Endothelial cell of umbilical vein (primary cell): ENCODE measurements at regions of chr11 and their contacts with region 1.

Region 1: GRCh38 chr11:119741369-119742262 is 12.6 kb upstream of the NECTIN1 start:
- DNase-seq: peak; percentile 20
- H3K4me3 ChIP-seq: no peak overlapping the region
- H3K27ac ChIP-seq: no peak overlapping the region
- H3K4me1 ChIP-seq: no peaks in the 10 kb centered on the region
- H3K27me3 ChIP-seq: peaks cover 23 to 30% of the 10 kb centered on the region in 2 experiments
- CTCF ChIP-seq: peak; percentile 79 to 94
- POLR2A ChIP-seq: no peak

Region 2: GRCh38 chr11:119641983-119642745 is 99.5 kb before region 1 on chr11:
- CTCF ChIA-PET with region 1: interaction called, 9 read pairs
- POLR2A ChIA-PET with region 1: no interaction called
- dilution Hi-C with region 1: no loop called
- intact Hi-C with region 1: loop called (anchors 1 kb)
- DNase-seq: peak; percentile 13
- H3K4me3 ChIP-seq: no peak overlapping the region
- H3K27ac ChIP-seq: no peak overlapping the region
- H3K4me1 ChIP-seq: no peaks in the 10 kb centered on the region
- H3K27me3 ChIP-seq: peaks cover 0 to 2% of the 10 kb centered on the region in 2 experiments
- CTCF ChIP-seq: peak; percentile 59 to 69
- POLR2A ChIP-seq: no peak

Region 3: DNA sequence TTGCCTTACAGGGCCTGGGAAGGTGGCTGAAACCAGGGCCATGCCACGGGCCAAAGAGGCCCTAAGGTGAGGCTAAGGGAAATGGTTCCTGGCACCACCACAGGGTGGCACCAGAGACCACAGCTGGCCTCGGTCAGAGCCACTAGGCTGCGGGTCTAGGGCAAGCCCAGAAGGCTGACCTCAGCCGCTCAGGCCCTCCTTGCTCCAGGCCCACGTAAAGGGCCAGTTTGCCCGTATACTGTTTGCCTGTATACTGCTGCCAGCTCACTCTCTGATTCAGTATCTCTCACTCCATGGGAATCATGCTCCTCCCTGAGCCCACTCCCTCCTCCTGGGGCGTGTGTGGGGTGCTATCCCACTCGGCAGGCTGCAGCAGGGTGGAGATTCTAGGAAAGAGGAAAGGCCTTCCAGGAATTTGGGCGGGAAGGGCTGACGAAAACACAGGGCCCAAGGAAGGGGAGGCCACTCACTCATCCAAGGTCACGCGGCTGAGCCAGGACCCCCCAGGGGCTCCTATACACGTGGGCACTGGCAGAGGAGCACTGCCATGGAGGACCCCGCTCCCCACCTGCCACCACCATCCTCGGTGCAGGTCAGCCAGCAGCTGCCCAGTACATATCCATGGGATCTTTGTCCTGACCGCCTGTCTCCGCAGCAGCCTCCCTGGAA is 75.0 kb before region 1 on chr11:
- CTCF ChIA-PET with region 1: interaction called, 4 read pairs
- POLR2A ChIA-PET with region 1: no interaction called
- dilution Hi-C with region 1: no loop called
- intact Hi-C with region 1: loop called (anchors 1 kb)
- DNase-seq: peak; percentile 65
- H3K4me3 ChIP-seq: no peak overlapping the region
- H3K27ac ChIP-seq: no peak overlapping the region
- H3K4me1 ChIP-seq: peaks cover 8% of the 10 kb centered on the region
- H3K27me3 ChIP-seq: no peaks in the 10 kb centered on the region
- CTCF ChIP-seq: peak; percentile 87 to 95
- POLR2A ChIP-seq: no peak